Activated T-helper 1 cell treated with anti-CD3 and anti-CD28 coated beads, Interleukin-12 subunit alpha, Interleukin-12 subunit beta, Interleukin-2, Interleukin-4 antibody, amounts not matched to agents 30 ng/mL and 10 ng/mL and 1 ng/mL, durations not matched to agents 14 hours and 24 hours and 36 hours (primary cell): ENCODE measurements at regions of chr11 and their contacts with region 1.

Region 1: GRCh38 chr11:67239783-67240575 is 26.3 kb upstream of the GRK2 start:
- DNase-seq: peak; percentile 96
- H3K4me3 Mint-ChIP-seq: peak overlapping the region; percentile 100
- H3K27ac Mint-ChIP-seq: peak overlapping the region; percentile 100
- H3K4me1 Mint-ChIP-seq: peaks cover 58% of the 10 kb centered on the region
- H3K27me3 Mint-ChIP-seq: no peaks in the 10 kb centered on the region

Region 2: GRCh38 chr11:66616379-66617154 is 623.4 kb before region 1 on chr11 and contains the start of gene RBM14:
- intact Hi-C with region 1: loop called (anchors 2 kb)
- DNase-seq: peak; percentile 99
- H3K4me3 Mint-ChIP-seq: peak within 1 kb of the TSS; percentile 97
- H3K27ac Mint-ChIP-seq: peak within 1 kb of the TSS; percentile 98
- H3K4me1 Mint-ChIP-seq: peaks cover 36% of the 10 kb centered on the region
- H3K27me3 Mint-ChIP-seq: no peaks in the 10 kb centered on the region
- total RNA-seq, gene RBM14: 198 and 200 TPM in 2 replicates

Region 3: GRCh38 chr11:66842896-66843775 is 396.8 kb before region 1 on chr11 and contains the start of gene RCE1:
- intact Hi-C with region 1: loop called (anchors 10 kb)
- DNase-seq: peak; percentile 90
- H3K4me3 Mint-ChIP-seq: peak within 1 kb of the TSS; percentile 90
- H3K27ac Mint-ChIP-seq: peak within 1 kb of the TSS; percentile 96
- H3K4me1 Mint-ChIP-seq: peaks cover 32% of the 10 kb centered on the region
- H3K27me3 Mint-ChIP-seq: no peaks in the 10 kb centered on the region
- total RNA-seq, gene RCE1: 30.9 and 34.4 TPM in 2 replicates

Region 4: DNA sequence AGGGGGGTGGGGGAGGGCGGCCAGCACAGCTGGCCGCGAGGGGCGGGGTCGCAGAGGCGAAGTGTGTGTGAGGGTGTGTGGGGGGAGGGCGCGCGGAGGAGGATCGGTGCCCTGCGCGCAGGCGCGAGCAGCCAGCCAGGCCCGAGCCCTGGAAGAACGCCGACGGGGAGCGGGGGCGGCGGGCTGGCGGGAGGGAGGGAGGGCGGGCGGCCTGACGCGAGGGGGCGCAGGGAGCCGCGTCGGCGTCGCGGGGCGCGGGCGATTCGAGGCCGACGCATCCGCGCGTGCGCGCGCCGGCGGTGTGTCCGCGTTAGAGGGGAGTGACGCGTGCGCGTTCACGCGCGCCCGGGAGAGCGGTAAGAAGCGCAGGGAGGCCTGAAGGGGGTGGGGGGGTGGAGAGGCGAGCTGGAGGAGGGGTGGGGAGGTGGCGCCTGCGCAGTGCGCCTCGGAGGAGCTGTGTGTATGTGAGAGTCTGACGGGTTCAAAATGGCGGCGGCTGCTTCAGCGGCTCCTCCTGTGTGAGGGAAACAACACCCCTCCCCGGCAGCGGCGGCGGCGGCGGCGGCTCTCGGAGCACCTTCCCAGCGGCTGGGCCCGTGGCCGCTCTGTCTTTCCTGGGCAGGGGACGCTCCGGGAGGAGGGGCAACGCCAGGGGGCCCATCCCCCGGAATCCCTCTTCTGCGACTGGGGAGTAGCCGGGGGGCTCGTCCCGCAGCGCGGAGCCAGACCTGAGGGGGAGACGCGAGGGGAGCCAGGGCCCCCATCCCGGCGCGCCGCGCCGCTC is 121.0 kb before region 1 on chr11 and contains the start of gene KDM2A:
- intact Hi-C with region 1: loop called (anchors 1 kb)
- DNase-seq: peak; percentile 95
- H3K4me3 Mint-ChIP-seq: peak within 1 kb of the TSS; percentile 99
- H3K27ac Mint-ChIP-seq: peak within 1 kb of the TSS; percentile 92
- H3K4me1 Mint-ChIP-seq: peaks cover 23% of the 10 kb centered on the region
- H3K27me3 Mint-ChIP-seq: peaks cover 12% of the 10 kb centered on the region
- total RNA-seq, gene KDM2A: 114 and 119 TPM in 2 replicates

Region 5: DNA sequence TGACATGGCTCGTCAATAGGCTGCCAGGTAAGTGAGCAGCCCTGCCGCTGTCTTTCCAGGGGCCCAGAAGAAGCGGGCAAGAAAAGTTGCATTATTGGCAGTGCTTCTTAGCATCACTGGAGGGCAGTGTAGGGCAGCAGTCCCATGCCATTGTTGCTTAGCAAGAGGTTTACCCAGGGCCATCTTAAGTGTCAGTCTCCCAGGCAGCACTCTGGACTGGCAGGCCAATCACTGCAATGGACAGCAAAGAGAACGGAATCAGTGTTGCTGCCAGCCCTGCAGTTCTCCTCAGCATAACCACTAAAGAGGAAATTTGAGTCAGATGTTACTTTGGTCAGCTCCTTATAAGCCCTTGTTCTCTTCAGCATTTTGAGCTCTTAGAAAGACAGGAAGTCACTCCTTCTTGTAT is 12.9 kb after region 1 on chr11:
- intact Hi-C with region 1: loop called (anchors 1 kb)
- DNase-seq: no peak
- H3K4me3 Mint-ChIP-seq: no peak overlapping the region
- H3K27ac Mint-ChIP-seq: peak overlapping the region; percentile 30
- H3K4me1 Mint-ChIP-seq: peaks cover 55% of the 10 kb centered on the region
- H3K27me3 Mint-ChIP-seq: no peaks in the 10 kb centered on the region

Region 6: GRCh38 chr11:67288452-67289225 is 48.7 kb after region 1 on chr11:
- intact Hi-C with region 1: loop called (anchors 1 kb)
- DNase-seq: peak; percentile 88
- H3K4me3 Mint-ChIP-seq: peak overlapping the region; percentile 77
- H3K27ac Mint-ChIP-seq: peak overlapping the region; percentile 97
- H3K4me1 Mint-ChIP-seq: peaks cover 36% of the 10 kb centered on the region
- H3K27me3 Mint-ChIP-seq: peaks cover 2% of the 10 kb centered on the region

Region 7: DNA sequence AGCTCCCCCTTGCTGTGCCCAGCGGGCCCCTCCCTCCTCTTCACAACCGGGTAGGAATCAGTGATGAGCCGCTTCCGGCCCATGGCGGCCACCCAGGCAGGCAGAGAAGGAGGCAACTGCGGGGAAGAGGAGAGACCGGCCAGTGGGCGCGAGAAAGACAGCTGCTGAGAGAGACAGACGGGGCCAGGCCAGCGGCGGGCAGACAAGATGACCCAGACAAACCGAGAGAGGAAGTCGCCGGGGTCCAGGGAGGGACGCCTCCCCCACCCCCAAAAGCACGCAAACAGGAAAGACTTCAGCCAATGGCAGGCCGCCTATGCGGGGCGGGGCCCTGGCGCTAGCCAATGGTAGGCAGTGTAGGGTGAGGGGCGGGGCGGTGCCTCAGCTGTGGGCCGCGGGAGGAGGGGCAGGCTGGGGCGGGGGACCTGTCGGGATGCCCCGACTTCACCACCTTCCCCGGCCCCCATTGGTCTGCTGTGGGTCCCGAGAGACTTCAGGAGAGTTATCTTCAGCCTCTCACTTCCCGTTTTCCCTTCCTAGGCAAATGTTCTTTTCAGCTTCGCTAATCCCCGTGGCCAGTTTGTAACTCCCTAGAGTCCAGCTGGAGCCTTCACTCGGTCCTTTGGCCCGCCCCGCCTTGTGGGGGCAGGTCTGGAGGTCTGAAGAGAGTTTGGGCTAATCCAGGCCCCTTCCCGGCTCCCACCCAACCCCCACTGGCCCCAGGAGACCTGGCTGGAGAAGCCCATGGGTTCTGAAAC is 113.5 kb after region 1 on chr11 and contains the start of gene POLD4:
- intact Hi-C with region 1: loop called (anchors 1 kb)
- DNase-seq: peak; percentile 95
- H3K4me3 Mint-ChIP-seq: peak within 1 kb of the TSS; percentile 94
- H3K27ac Mint-ChIP-seq: peak within 1 kb of the TSS; percentile 98
- H3K4me1 Mint-ChIP-seq: peaks cover 34% of the 10 kb centered on the region
- H3K27me3 Mint-ChIP-seq: peaks cover 1% of the 10 kb centered on the region
- total RNA-seq, gene POLD4: 36.7 and 39.8 TPM in 2 replicates